ENCODE measurements at regions of chr11 and their contacts with region 1.

Region 1: DNA sequence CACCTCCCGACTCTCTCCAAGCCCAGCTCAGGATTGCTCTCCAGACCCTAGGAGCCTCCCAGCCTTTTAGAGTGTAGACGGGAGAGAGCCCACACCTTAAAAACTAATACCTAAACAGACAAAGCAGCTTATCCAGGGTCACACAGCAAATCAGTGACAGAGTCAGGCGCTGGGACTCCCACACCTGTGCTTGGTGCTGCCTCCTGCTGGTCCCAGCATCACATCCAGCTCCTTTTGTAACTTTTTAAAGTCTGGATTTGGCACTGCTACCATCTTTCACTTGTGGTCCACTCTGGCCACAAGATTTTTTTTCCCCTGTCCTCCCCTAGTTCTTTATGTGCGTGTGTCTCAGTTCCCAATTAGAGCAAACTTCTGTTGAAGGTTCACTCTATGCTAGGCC is 4.7 kb downstream of the ANO1 start:
- DNase-seq: no peak
- H3K4me3 ChIP-seq: no peak overlapping the region
- H3K27ac ChIP-seq: no peak overlapping the region
- H3K4me1 ChIP-seq: peaks cover under 1 to 32% (median 5%) of the 10 kb centered on the region in 3 donors
- H3K27me3 ChIP-seq: peaks cover 0 to 53% (median 1%) of the 10 kb centered on the region in 4 donors
- CTCF ChIP-seq: peak in 1 of 6 experiments; percentile 44
- POLR2A ChIP-seq: no peak

Region 2: DNA sequence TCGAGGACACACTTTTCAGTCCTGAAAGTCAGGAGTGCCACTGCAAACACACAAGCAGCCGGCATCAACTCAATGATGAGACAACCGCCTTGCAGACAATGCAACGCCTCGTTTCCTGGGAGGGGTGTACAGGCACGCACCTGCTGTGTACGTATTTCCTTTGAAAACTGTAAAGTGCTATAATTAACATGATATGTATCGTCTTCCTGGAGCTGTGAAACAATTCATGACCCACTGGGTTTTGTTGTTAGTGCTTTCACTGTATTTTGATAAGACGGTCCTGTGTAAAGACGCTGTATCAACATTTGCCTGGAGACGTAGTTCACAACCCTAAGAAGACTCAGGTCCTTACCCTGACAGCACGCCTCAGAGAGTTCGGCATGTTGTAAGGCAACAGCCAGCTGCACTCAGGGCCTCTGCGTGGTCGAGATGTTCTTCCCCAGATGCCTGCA is 110.5 kb before region 1 on chr11:
- intact Hi-C with region 1: no loop called
- DNase-seq: no peak
- H3K4me3 ChIP-seq: no peak overlapping the region
- H3K27ac ChIP-seq: no peak overlapping the region
- H3K4me1 ChIP-seq: no peaks in the 10 kb centered on the region
- H3K27me3 ChIP-seq: peaks cover 0 to 79% (median 0%) of the 10 kb centered on the region in 4 donors
- CTCF ChIP-seq: no peak
- POLR2A ChIP-seq: no peak

Region 3: DNA sequence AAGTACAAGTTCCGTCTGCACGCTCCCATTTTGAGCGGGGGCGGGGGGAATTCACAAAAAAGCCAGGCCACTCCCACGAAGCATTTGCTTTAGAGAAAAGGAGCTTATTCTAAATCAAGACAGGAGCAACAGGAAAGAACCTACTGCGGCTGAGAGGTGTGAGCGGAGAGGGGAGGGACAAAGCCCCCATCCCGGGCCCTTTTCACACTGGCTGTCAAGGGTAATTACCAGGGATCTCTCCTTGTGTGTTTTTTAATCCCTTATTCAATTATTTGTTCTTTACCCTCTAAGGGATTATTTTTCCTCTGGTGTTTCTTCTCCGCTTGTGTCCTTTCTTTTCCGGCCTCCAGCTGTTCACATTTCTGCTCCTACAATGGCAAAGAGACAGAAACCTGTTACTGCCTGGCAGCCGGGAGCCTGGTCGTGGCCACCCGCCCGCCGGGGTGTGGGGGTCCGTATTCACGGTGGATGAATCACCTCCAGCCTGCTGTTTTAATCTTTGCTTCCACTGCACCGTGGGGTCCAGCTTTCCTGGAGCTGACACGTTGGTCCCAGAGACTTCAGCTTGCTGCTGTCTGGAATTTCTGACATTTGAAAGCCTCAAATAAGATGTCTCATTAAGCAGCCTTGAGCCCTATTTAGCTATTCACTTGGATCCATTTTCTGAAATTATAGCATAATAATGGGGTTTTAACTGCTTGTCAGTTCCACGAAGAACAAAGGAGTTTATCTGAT is 58.8 kb after region 1 on chr11:
- intact Hi-C with region 1: loop called (anchors 10 kb)
- DNase-seq: no peak
- H3K4me3 ChIP-seq: peak overlapping the region; percentile 8 to 29 (median 22)
- H3K27ac ChIP-seq: peak overlapping the region; percentile 42 to 83 (median 80)
- H3K4me1 ChIP-seq: peaks cover 16 to 35% (median 21%) of the 10 kb centered on the region in 3 donors
- H3K27me3 ChIP-seq: peaks cover 0 to 51% (median 0%) of the 10 kb centered on the region in 4 donors
- CTCF ChIP-seq: no peak
- POLR2A ChIP-seq: no peak